ENCODE measurements at regions of chr6 and their contacts with region 1.

Region 1: GRCh38 chr6:151765444-151765886 is 42.0 kb upstream of the ESR1 start:
- DNase-seq: peak; percentile 88
- H3K4me3 Mint-ChIP-seq: no peak overlapping the region
- H3K27ac Mint-ChIP-seq: no peak overlapping the region
- H3K4me1 Mint-ChIP-seq: peaks cover 26% of the 10 kb centered on the region
- H3K27me3 Mint-ChIP-seq: peaks cover 24% of the 10 kb centered on the region

Region 2: GRCh38 chr6:151796842-151797530 is 31.5 kb after region 1 on chr6:
- intact Hi-C with region 1: no loop called
- DNase-seq: no peak
- H3K4me3 Mint-ChIP-seq: no peak overlapping the region
- H3K27ac Mint-ChIP-seq: no peak overlapping the region
- H3K4me1 Mint-ChIP-seq: no peaks in the 10 kb centered on the region
- H3K27me3 Mint-ChIP-seq: peaks cover 23% of the 10 kb centered on the region

Region 3: DNA sequence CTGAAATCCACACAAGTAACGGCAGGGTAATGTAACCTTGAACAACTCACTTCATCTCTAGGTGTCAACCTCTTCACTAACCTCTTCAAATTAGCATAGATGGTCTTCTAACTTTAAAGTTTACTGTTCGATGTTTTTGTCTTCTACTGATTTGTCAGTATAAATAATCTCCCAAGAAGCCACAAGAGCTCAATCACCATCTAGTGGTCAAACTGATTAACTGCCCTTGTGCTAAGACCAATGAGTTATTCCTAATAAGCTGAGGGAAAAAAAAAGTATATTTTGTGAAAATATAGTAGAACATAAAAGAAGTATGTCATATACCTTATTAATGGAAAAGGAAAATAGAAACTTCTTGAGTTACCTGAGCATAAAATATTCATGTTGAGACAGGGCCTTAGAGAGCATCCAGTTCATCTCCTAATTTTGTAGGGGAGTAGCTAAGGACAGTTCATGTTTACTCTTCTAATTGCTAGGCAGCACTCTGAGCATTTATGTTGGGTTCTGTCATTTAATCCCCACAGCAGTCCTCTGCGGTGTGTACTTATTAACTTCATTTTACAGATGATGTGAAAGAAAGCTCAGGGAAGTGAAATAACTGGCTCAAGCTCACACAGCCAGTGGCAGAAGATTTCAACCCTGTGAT is 359.1 kb after region 1 on chr6:
- intact Hi-C with region 1: loop called (anchors 1 kb)
- DNase-seq: no peak
- H3K4me3 Mint-ChIP-seq: no peak overlapping the region
- H3K27ac Mint-ChIP-seq: no peak overlapping the region
- H3K4me1 Mint-ChIP-seq: no peaks in the 10 kb centered on the region
- H3K27me3 Mint-ChIP-seq: no peaks in the 10 kb centered on the region

Region 4: GRCh38 chr6:152267967-152268845 is 502.7 kb after region 1 on chr6:
- intact Hi-C with region 1: loop called (anchors 1 kb)
- DNase-seq: peak; percentile 76
- H3K4me3 Mint-ChIP-seq: no peak overlapping the region
- H3K27ac Mint-ChIP-seq: no peak overlapping the region
- H3K4me1 Mint-ChIP-seq: peaks cover 8% of the 10 kb centered on the region
- H3K27me3 Mint-ChIP-seq: no peaks in the 10 kb centered on the region

Region 5: DNA sequence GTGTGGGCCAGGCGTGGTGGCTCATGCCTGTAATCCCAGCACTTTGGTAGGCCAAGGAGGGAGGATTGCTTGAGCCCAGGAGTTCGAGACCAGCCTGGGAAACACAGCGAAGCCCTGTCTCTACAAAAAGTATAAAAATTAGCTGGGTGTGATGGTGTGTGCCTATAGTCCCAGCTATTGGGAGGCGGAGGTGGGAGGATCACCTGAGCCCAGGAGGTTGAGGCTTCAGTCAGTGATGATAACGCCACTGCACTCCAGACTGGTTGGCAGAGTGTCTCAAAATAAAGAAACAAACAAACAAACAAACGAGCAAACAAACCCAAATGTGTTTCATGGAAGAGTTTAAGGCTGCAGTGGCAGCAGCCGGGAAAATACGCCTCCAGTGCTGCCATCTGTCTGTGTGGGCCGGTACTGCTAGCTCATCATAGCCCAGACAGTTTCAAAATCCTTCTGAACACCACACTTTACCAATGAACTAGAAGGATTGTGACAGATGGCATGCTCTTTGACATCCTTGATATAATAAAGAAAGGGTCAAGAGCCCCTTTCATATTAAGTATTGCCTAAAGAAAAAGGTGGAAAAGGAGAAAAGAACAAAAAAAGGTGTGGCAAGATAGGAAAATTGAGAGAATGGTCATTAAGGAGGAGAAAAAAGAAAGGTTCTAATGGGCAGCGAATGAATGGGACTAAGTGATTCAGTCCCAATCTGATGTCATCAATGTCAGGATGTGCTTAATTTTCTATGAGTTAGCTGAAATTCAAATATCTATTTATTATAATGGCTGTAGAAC is 573.1 kb after region 1 on chr6:
- intact Hi-C with region 1: loop called (anchors 5 kb)
- DNase-seq: peak; percentile 87
- H3K4me3 Mint-ChIP-seq: no peak overlapping the region
- H3K27ac Mint-ChIP-seq: no peak overlapping the region
- H3K4me1 Mint-ChIP-seq: peaks cover 2% of the 10 kb centered on the region
- H3K27me3 Mint-ChIP-seq: peaks cover 16% of the 10 kb centered on the region